Caco-2 (cell line): ENCODE measurements at regions of chr5 and their contacts with region 1.

Region 1: GRCh38 chr5:149114403-149115312 is 26.6 kb upstream of the ABLIM3 start:
- DNase-seq: peak; percentile 70 to 79
- H3K4me3 ChIP-seq: no peak overlapping the region
- H3K4me3 Mint-ChIP-seq: no peak overlapping the region
- H3K27ac Mint-ChIP-seq: no peak overlapping the region
- H3K4me1 ChIP-seq: no peaks in the 10 kb centered on the region
- H3K4me1 Mint-ChIP-seq: no peaks in the 10 kb centered on the region
- H3K27me3 ChIP-seq: no peaks in the 10 kb centered on the region
- H3K27me3 Mint-ChIP-seq: peaks cover 26% of the 10 kb centered on the region
- CTCF ChIP-seq: peak; percentile 76 to 90

Region 2: DNA sequence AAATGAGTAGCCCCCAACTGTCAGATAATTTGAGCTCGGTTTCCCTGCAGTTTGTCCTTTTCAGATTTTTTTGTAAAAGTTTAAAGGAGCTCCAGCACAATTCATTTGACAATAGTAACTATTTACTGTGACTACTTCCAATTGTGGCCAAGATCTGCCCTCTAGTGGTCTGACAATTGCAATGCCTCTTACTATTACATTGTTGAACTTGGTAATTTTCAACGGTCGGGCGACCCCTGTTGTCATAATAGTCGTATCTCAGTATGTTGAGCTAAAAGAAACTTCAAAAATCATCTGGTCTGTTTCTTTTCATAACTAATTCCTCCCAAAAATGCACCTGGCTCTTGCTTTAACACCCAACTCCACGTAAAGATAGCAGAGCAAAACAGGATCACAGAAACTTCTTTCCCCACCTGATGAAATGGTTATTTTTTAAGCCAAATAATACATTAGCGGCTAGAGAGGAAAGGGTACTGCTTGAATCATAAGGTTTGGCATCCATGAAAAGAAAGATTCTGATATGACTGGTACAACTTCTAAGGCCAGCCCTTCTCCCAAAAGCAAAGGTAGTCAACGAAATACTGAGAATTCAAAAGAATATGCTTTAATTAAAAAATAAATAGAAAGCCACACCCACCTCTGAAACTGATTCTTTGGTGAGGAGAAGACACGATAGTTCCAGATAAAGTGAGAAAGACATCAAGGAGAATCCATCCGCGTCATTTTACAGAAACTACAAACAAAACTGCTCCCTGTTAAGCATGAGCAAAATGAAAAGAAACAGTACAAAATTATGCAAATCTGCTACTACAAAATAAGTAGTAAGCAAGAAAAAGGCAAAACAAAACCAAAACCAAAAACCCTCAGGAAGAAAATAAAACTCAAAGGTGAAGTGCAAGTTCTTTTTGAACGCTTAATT is 383.5 kb before region 1 on chr5:
- CTCF ChIA-PET with region 1: interaction called, 36 read pairs
- POLR2A ChIA-PET with region 1: no interaction called
- intact Hi-C with region 1: loop called (anchors 1 kb)
- DNase-seq: peak; percentile 76 to 78
- H3K4me3 ChIP-seq: no peak overlapping the region
- H3K4me3 Mint-ChIP-seq: no peak overlapping the region
- H3K27ac Mint-ChIP-seq: no peak overlapping the region
- H3K4me1 ChIP-seq: no peaks in the 10 kb centered on the region
- H3K4me1 Mint-ChIP-seq: no peaks in the 10 kb centered on the region
- H3K27me3 ChIP-seq: no peaks in the 10 kb centered on the region
- H3K27me3 Mint-ChIP-seq: peaks cover 15% of the 10 kb centered on the region
- CTCF ChIP-seq: peak; percentile 89 to 98

Region 3: GRCh38 chr5:148820461-148821395 is 293.9 kb before region 1 on chr5:
- CTCF ChIA-PET with region 1: interaction called, 6 read pairs
- POLR2A ChIA-PET with region 1: no interaction called
- intact Hi-C with region 1: loop called (anchors 1 kb)
- DNase-seq: peak in 1 of 2 experiments; percentile 37
- H3K4me3 ChIP-seq: no peak overlapping the region
- H3K4me3 Mint-ChIP-seq: no peak overlapping the region
- H3K27ac Mint-ChIP-seq: no peak overlapping the region
- H3K4me1 ChIP-seq: peaks cover 2% of the 10 kb centered on the region; the same call in 1 of the 2 replicates
- H3K4me1 Mint-ChIP-seq: peaks cover 4% of the 10 kb centered on the region
- H3K27me3 ChIP-seq: peaks cover 2% of the 10 kb centered on the region; the same call in 1 of the 2 replicates
- H3K27me3 Mint-ChIP-seq: peaks cover 27% of the 10 kb centered on the region
- CTCF ChIP-seq: peak; percentile 69 to 71

Region 4: GRCh38 chr5:148957591-148958202 is 157.0 kb before region 1 on chr5:
- CTCF ChIA-PET with region 1: interaction called, 20 read pairs
- POLR2A ChIA-PET with region 1: no interaction called
- intact Hi-C with region 1: loop called (anchors 2 kb)
- DNase-seq: peak; percentile 47 to 61
- H3K4me3 ChIP-seq: no peak overlapping the region
- H3K4me3 Mint-ChIP-seq: no peak overlapping the region
- H3K27ac Mint-ChIP-seq: no peak overlapping the region
- H3K4me1 ChIP-seq: peaks cover 6% of the 10 kb centered on the region; the same call in 1 of the 2 replicates
- H3K4me1 Mint-ChIP-seq: no peaks in the 10 kb centered on the region
- H3K27me3 ChIP-seq: no peaks in the 10 kb centered on the region
- H3K27me3 Mint-ChIP-seq: peaks cover 9% of the 10 kb centered on the region
- CTCF ChIP-seq: peak; percentile 87 to 88

Region 5: DNA sequence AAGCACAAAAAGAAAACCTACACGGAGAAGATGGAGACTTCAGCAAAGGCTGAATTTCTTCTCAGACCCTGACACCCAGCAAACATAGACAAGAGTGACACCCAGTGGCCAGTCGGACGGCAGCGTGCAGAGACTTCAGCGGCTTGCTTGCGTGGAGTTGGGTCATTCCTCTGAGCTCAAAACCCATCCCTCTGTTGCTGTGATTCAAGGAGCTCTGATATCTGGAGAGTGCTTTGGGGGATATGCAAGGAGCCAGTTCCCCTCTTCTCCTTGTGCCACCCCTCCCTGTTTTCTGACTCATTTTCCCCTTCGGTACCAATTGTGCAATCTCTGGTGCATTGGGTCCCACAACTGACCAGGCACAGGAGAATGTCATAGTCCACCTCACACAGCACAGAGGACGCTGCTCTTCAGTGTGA is 79.3 kb before region 1 on chr5:
- CTCF ChIA-PET with region 1: interaction called, 32 read pairs
- POLR2A ChIA-PET with region 1: no interaction called
- intact Hi-C with region 1: loop called (anchors 1 kb)
- DNase-seq: peak; percentile 70 to 82
- H3K4me3 ChIP-seq: no peak overlapping the region
- H3K4me3 Mint-ChIP-seq: no peak overlapping the region
- H3K27ac Mint-ChIP-seq: no peak overlapping the region
- H3K4me1 ChIP-seq: no peaks in the 10 kb centered on the region
- H3K4me1 Mint-ChIP-seq: no peaks in the 10 kb centered on the region
- H3K27me3 ChIP-seq: no peaks in the 10 kb centered on the region
- H3K27me3 Mint-ChIP-seq: peaks cover 3% of the 10 kb centered on the region
- CTCF ChIP-seq: peak; percentile 75 to 94

Region 6: DNA sequence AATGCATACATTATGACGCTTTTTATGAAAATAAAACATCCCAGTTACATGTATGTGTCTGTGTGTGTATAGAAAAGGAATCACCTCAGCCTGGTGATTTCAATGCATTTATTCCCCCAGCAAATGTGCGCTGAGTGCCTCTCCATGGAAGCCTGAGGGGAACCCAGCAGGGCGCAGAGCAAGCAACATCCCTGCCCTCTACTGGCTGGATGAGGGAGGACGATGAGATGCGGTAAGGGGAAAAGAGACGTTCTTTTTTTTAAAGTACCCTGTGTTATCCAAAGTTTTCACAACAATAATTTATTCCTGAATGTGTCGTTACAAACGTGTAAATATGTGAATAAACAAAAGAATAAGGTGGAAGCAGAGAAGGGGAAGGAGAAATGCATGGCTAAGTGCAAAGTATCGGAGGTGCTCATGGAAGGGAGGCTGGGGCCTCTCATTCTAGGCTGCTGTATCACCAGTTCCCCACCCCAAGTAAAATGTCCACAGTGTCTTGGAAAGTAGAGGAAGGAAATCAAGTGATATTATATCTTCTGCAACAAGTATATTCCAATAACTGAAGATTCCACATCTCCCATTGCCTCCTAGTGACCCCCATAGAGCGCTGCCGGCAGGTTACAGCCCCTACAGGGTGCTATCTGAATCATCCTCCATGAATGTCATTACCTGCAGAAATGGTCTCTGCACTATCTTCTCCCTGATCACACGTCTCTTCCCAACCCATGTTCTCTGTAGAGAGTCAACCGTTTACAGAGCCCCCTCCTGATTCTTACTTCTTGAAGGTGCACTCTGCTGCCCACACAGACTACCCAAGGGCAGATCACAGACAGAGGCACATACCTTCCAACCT is 13.6 kb after region 1 on chr5:
- CTCF ChIA-PET with region 1: interaction called, 20 read pairs
- POLR2A ChIA-PET with region 1: no interaction called
- intact Hi-C with region 1: no loop called
- DNase-seq: peak; percentile 48 to 54
- H3K4me3 ChIP-seq: no peak overlapping the region
- H3K4me3 Mint-ChIP-seq: no peak overlapping the region
- H3K27ac Mint-ChIP-seq: no peak overlapping the region
- H3K4me1 ChIP-seq: no peaks in the 10 kb centered on the region
- H3K4me1 Mint-ChIP-seq: peaks cover 30% of the 10 kb centered on the region
- H3K27me3 ChIP-seq: no peaks in the 10 kb centered on the region
- H3K27me3 Mint-ChIP-seq: peaks cover 6% of the 10 kb centered on the region
- CTCF ChIP-seq: peak; percentile 63 to 88